ENCODE measurements at regions of chr9 and their contacts with region 1.

Region 1: GRCh38 chr9:6715755-6716643 is 41.8 kb upstream of the KDM4C start:
- DNase-seq: peak; percentile 76
- ATAC-seq: peak; percentile 96
- H3K4me3 ChIP-seq: peak overlapping the region; percentile 68
- H3K27ac ChIP-seq: peak overlapping the region; percentile 73
- H3K4me1 ChIP-seq: peaks cover 13% of the 10 kb centered on the region
- H3K27me3 ChIP-seq: no peaks in the 10 kb centered on the region
- CTCF ChIP-seq: no peak
- EP300 ChIP-seq: no peak
- POLR2A ChIP-seq: peak; percentile 97
- RAD21 ChIP-seq: no peak

Region 2: DNA sequence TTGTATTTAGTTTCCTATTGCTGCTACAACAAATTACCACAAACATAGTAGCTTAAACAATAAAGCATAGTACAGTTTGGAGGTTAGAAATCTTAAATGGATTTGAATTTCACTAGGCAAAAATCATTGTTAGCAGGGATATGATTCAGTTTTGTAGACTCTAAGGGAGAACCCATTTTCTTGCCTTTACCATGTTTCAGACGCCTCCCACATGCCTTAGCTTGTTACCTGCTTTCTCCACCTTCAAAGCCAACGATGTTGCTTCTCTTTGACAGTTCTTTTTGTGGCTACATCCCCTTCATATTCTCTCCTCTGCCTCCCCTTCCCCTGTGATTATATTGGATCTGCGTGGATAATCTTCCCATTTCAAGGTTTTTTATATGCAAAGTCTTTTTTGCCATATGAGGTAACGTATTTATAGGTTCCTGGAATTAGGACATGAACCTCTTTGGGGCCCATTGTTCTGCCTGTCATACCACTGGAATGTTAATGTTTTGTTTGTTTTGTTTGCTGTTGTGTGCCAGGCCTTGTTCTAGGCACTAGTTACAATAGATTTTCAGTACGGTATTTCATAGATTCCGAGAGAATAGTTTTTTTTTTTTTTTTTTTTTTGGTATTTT is 248.9 kb before region 1 on chr9:
- CTCF ChIA-PET with region 1: no interaction called
- POLR2A ChIA-PET with region 1: no interaction called
- RAD21 ChIA-PET with region 1: no interaction called
- SMC1A ChIA-PET with region 1: no interaction called
- in situ Hi-C with region 1: no loop called
- intact Hi-C with region 1: no loop called
- DNase-seq: no peak
- ATAC-seq: no peak
- H3K4me3 ChIP-seq: no peak overlapping the region
- H3K27ac ChIP-seq: no peak overlapping the region
- H3K4me1 ChIP-seq: no peaks in the 10 kb centered on the region
- H3K27me3 ChIP-seq: no peaks in the 10 kb centered on the region
- CTCF ChIP-seq: no peak
- EP300 ChIP-seq: no peak
- POLR2A ChIP-seq: no peak
- RAD21 ChIP-seq: no peak

Region 3: DNA sequence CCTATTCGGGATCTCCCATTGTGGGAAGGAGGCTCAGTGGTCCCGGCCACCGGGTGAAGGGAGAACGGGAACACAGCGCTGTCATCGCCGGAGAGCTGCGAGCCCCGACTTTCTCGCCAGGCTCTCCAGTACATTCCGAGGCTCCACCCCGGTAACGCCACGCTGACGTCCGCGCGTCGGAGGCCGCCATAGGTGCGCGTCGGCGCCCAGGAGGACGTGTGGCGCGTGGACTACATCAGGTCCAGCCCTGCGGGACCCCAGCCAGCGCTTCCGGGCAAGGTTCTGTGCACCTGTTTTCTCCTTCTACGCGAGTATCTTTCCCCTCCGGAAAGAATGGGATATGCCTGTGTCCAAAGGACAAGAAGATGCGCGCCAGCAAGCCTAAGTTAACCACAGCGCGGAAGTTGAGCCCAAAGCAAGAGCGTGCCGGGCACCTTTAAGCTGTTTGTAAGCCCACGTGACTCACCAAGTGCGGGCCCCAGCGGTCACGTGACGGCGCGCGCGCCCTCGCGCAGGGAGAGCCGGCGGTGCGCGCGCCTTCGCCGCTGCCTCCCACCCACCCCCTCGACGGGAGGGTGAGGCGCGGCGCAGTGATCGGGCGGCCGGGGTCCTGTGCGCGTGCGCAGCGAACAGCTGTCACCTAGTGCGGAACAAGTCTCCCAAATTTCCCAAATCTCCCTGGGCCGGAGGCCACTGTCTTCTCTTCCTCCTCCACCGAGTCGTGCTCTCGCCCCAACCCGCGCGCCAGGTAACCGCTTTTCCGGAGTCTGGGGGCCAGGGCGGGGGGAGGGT is 41.7 kb after region 1 on chr9 and contains the start of gene KDM4C:
- CTCF ChIA-PET with region 1: interaction called, 3 read pairs
- POLR2A ChIA-PET with region 1: interaction called, 12 read pairs
- RAD21 ChIA-PET with region 1: interaction called, 18 read pairs
- SMC1A ChIA-PET with region 1: interaction called, 20 read pairs
- in situ Hi-C with region 1: no loop called
- intact Hi-C with region 1: no loop called
- DNase-seq: peak; percentile 88
- ATAC-seq: peak; percentile 89
- H3K4me3 ChIP-seq: peak within 1 kb of the TSS; percentile 76
- H3K27ac ChIP-seq: peak within 1 kb of the TSS; percentile 96
- H3K4me1 ChIP-seq: peaks cover 6% of the 10 kb centered on the region
- H3K27me3 ChIP-seq: no peaks in the 10 kb centered on the region
- CTCF ChIP-seq: no peak
- EP300 ChIP-seq: peak in 1 of 2 experiments; percentile 54; a peak in 2 of 4 replicates
- POLR2A ChIP-seq: peak; percentile 95
- RAD21 ChIP-seq: no peak
- polyA plus RNA-seq, gene KDM4C: 6.8 to 11.7 TPM

Measured in GM12878 (cell line).